Cardiac septum (tissue), 1 donor: ENCODE measurements at regions of chr14 and their contacts with region 1.

Region 1: DNA sequence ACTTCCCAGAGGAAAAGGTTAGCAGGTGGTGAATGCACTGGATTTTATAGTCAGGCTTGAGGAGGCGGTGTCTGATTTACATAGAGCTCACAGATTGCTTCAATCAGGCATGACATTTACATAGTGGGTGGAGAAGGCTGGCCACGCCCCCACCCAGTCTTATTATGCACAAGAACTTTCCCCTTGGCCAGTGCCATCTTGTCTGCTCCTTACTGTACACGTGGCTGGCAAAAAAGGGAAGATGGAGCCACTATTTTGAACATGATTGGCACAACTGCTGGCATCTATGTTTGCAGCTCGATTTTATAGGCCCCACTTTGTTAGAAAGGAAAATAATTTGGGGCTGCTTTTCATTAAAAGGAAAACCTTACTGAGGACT is 10.9 kb upstream of the LGMN start:
- DNase-seq: no peak

Region 2: GRCh38 chr14:92719890-92720323 is 39.4 kb before region 1 on chr14:
- intact Hi-C with region 1: loop called (anchors 5 kb)
- DNase-seq: no peak

Region 3: DNA sequence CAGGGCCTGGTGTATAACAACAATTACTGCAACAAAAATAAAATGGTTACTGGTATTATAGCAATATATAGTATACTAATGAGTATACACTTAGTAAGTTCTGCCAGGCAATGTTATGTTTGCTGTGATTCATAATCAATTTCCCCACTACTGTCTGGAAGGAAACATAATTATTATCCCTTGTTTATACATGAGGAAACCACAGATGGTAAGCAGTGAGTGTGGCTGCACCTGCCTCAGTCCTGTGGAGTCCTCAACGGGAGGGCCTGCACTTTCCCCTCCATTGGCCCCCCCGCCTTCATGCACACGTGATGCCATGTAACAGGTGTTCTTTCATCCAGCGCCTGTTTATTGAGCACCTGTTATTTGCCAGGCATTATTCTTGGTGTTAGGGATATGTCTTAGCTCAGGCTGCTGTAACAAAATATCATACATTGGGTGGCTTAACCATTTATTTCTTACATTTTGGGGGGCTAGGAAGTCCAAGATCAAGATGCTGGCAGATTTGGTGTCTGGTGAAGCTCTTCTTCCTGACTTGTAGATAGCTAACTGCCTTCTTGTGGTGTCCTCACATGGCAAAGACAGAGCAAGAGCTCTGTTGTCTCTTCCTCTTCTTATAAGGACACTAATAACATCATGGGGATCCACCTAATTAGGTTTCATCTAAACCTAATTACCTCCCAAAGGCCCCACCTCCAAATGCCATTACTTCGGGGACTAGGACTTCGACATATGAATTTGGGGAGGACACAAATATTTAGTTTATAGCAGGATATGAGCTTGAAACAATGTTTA is 104.2 kb after region 1 on chr14:
- intact Hi-C with region 1: no loop called
- DNase-seq: no peak